ENCODE measurements at regions of chr9 and their contacts with region 1.

Region 1: GRCh38 chr9:126965541-126966428 is 51.2 kb downstream of the RALGPS1 start:
- DNase-seq: peak; percentile 47
- H3K4me3 Mint-ChIP-seq: no peak overlapping the region
- H3K27ac Mint-ChIP-seq: no peak overlapping the region
- H3K4me1 Mint-ChIP-seq: no peaks in the 10 kb centered on the region
- H3K27me3 Mint-ChIP-seq: no peaks in the 10 kb centered on the region
- CTCF ChIP-seq: peak; percentile 16

Region 2: DNA sequence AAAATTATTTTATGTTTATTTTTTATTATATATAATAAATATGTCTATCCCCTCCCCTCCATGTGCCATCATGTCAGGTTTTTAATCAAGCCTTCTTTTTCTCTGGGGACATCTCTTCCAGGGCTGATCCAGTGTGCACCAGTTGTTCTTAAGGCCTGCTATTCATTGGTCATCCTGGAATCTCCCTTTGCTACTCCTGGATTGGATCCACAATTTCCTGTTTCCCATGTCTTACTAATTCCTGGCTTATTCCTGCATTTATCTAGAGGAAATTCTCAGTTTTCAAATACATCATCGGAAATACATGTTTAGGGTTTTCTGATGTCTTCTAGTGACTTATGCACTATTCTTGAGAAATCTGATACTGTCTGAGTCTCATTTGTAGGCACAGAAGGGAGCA is 99.8 kb after region 1 on chr9:
- CTCF ChIA-PET with region 1: no interaction called
- intact Hi-C with region 1: loop called (anchors 10 kb)
- DNase-seq: no peak
- H3K4me3 Mint-ChIP-seq: no peak overlapping the region
- H3K27ac Mint-ChIP-seq: no peak overlapping the region
- H3K4me1 Mint-ChIP-seq: peaks cover 25% of the 10 kb centered on the region
- H3K27me3 Mint-ChIP-seq: no peaks in the 10 kb centered on the region
- CTCF ChIP-seq: no peak

Measured in Calu3 (cell line).